B cell (primary cell): ENCODE measurements at regions of chr10 and their contacts with region 1.

Region 1: GRCh38 chr10:119705434-119705831 is 20.4 kb upstream of the INPP5F start:
- DNase-seq: peak; percentile 62
- ATAC-seq: peak; percentile 13
- H3K4me3 ChIP-seq: peak overlapping the region in 3 of 5 experiments; percentile 18 to 46 (median 42)
- H3K4me3 Mint-ChIP-seq: peak overlapping the region; percentile 90
- H3K27ac ChIP-seq: peak overlapping the region; percentile 94
- H3K27ac Mint-ChIP-seq: peak overlapping the region; percentile 98
- H3K4me1 ChIP-seq: peaks cover 93 to 97% of the 10 kb centered on the region in 2 donors
- H3K4me1 Mint-ChIP-seq: peaks cover 81% of the 10 kb centered on the region
- H3K27me3 ChIP-seq: no peaks in the 10 kb centered on the region
- H3K27me3 Mint-ChIP-seq: no peaks in the 10 kb centered on the region
- CTCF ChIP-seq: no peak

Region 2: DNA sequence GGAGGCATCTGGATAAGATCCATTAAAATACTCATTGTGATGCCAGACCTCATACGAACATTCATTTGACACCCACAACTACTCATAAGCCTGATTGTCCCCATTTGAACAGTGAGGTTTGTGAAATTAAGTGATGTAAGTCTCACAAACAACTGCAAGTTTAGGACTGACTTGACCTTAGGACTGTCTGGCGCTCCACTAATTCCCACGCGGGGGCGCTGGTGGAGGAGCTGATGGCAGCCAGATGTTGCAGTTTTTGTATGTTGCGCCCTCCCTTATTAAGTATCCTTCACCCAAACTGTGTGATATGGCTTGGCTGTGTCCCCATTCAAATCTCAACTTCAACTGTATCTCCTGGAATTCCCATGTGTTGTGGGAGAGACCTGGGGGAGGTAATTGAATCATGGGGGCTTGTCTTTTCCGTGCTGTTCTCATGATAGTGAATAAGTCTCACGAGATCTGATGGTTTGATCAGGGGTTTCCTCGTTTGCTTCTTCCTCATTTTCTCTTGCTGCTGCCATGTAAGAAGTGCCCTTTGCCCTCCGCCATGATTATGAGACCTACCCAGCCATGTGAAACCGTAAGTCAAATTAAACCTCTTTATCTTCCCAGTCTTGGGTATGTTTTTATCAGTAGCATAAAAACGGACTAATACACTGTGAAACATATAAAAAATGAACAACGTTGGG is 88.4 kb before region 1 on chr10:
- CTCF ChIA-PET with region 1: no interaction called
- POLR2A ChIA-PET with region 1: no interaction called
- intact Hi-C with region 1: no loop called
- DNase-seq: no peak
- ATAC-seq: no peak
- H3K4me3 ChIP-seq: no peak overlapping the region
- H3K4me3 Mint-ChIP-seq: no peak overlapping the region
- H3K27ac ChIP-seq: no peak overlapping the region
- H3K27ac Mint-ChIP-seq: no peak overlapping the region
- H3K4me1 ChIP-seq: no peaks in the 10 kb centered on the region
- H3K4me1 Mint-ChIP-seq: peaks cover 2% of the 10 kb centered on the region
- H3K27me3 ChIP-seq: no peaks in the 10 kb centered on the region
- H3K27me3 Mint-ChIP-seq: no peaks in the 10 kb centered on the region
- CTCF ChIP-seq: no peak

Region 3: DNA sequence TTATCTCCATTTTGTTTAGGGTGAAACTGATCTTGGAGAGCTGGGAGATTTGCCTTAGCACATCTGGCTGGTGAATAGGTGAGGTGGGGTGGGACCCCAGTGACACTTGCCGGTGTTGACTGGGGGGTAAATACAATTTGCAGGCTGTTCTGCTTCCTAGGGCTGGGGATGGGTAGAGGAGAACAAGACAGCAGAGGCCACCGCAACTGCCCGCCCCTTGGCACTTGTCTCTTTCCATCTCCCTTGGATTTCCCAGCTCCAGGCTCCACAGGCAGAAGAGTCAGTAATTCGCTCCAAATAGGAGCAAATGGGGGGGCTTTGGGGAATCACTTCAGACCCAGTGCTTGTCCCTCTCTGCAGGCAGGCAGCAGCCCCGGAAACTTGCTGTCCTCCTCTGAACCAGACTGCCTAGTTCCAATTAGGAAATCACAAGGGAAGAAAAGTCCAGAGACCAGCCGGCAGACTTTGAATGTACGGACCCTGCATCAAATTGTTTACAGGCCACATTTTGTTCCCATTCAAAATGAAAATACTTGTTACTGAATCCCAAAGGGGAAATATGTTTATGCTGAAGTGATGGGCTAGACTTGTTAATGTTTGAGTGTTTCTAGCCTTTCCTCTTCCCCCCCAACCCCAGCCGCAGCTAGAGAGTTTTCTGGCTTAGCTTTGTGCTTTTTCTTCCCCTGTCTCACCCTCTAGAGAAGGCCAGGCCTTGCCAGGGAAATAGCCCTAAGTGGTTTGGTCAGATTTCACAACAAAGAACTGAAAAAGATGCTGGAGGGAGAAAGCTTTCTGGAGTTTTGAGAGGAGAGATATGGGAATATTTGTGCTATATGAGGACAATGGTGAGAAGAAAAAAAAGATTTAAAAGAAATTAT is 10.4 kb after region 1 on chr10:
- CTCF ChIA-PET with region 1: interaction called, 14 read pairs
- POLR2A ChIA-PET with region 1: interaction called, 10 read pairs
- intact Hi-C with region 1: no loop called
- DNase-seq: no peak
- ATAC-seq: no peak
- H3K4me3 ChIP-seq: no peak overlapping the region
- H3K4me3 Mint-ChIP-seq: no peak overlapping the region
- H3K27ac ChIP-seq: no peak overlapping the region
- H3K27ac Mint-ChIP-seq: peak overlapping the region; percentile 46
- H3K4me1 ChIP-seq: no peaks in the 10 kb centered on the region
- H3K4me1 Mint-ChIP-seq: peaks cover 27% of the 10 kb centered on the region
- H3K27me3 ChIP-seq: no peaks in the 10 kb centered on the region
- H3K27me3 Mint-ChIP-seq: no peaks in the 10 kb centered on the region
- CTCF ChIP-seq: no peak